PC-9 (cell line): ENCODE measurements at regions of chr1 and their contacts with region 1.

Region 1: GRCh38 chr1:115379943-115380342 is 41.9 kb upstream of the NGF start:
- DNase-seq: no peak
- H3K4me3 ChIP-seq: no peak overlapping the region
- H3K27ac ChIP-seq: no peak overlapping the region
- H3K4me1 ChIP-seq: peaks cover 8% of the 10 kb centered on the region
- H3K27me3 ChIP-seq: no peaks in the 10 kb centered on the region
- CTCF ChIP-seq: no peak

Region 2: GRCh38 chr1:115340879-115341278 is 39.1 kb before region 1 on chr1:
- CTCF ChIA-PET with region 1: no interaction called
- POLR2A ChIA-PET with region 1: no interaction called
- intact Hi-C with region 1: no loop called
- DNase-seq: no peak
- H3K4me3 ChIP-seq: no peak overlapping the region
- H3K27ac ChIP-seq: no peak overlapping the region
- H3K4me1 ChIP-seq: peaks cover 13% of the 10 kb centered on the region
- H3K27me3 ChIP-seq: no peaks in the 10 kb centered on the region
- CTCF ChIP-seq: no peak

Region 3: DNA sequence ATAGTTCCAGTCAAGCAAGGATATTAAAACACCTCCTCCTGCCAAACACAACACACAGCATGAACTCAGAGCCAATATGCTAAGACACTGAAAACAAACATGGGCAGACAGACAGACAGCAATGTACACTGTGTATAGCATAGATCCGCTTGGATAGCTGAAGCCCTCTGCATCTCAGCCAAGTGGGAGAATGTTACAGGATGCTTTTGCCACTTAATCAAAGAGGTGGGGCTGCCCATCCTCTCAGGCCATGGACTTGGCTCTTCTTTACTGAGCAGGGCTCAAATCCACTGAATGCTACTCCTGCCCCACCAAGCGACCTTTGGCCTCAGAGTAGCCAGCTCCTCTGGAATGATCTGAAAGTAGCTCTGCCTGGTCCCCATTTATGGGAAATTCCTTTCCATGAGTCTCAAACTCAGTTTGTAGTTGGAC is 22.8 kb after region 1 on chr1:
- CTCF ChIA-PET with region 1: no interaction called
- POLR2A ChIA-PET with region 1: no interaction called
- intact Hi-C with region 1: loop called (anchors 1 kb)
- DNase-seq: no peak
- H3K4me3 ChIP-seq: no peak overlapping the region
- H3K27ac ChIP-seq: no peak overlapping the region
- H3K4me1 ChIP-seq: no peaks in the 10 kb centered on the region
- H3K27me3 ChIP-seq: no peaks in the 10 kb centered on the region
- CTCF ChIP-seq: no peak

Region 4: DNA sequence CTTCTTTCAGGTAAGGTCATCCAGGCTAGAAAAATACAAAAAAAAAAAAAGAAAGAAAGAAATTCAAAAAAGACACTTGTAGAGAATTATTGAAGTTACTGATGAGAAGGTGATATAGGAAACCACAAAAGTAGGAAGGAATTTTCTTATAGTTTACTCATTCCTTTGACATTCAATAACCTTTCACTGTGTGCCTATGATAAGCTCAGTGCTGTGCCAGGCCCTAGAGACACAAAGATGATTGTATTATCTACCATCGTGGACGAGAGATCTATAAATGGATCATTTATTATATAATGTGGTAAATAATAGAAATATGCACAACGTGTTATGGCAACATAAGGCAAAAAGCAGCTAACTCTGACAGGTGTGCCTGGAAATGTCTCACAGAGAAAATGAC is 67.7 kb after region 1 on chr1:
- CTCF ChIA-PET with region 1: no interaction called
- POLR2A ChIA-PET with region 1: no interaction called
- intact Hi-C with region 1: loop called (anchors 2 kb)
- DNase-seq: peak in 1 of 2 experiments; percentile 77
- H3K4me3 ChIP-seq: no peak overlapping the region
- H3K27ac ChIP-seq: peak overlapping the region; percentile 17
- H3K4me1 ChIP-seq: peaks cover 20% of the 10 kb centered on the region
- H3K27me3 ChIP-seq: no peaks in the 10 kb centered on the region
- CTCF ChIP-seq: no peak